GM10248 (cell line): ENCODE measurements at regions of chr10 and their contacts with region 1.

Region 1: GRCh38 chr10:77710759-77711682 is 73.4 kb upstream of the KCNMA1 start:
- DNase-seq: peak; percentile 87
- CTCF ChIP-seq: peak; percentile 99

Region 2: DNA sequence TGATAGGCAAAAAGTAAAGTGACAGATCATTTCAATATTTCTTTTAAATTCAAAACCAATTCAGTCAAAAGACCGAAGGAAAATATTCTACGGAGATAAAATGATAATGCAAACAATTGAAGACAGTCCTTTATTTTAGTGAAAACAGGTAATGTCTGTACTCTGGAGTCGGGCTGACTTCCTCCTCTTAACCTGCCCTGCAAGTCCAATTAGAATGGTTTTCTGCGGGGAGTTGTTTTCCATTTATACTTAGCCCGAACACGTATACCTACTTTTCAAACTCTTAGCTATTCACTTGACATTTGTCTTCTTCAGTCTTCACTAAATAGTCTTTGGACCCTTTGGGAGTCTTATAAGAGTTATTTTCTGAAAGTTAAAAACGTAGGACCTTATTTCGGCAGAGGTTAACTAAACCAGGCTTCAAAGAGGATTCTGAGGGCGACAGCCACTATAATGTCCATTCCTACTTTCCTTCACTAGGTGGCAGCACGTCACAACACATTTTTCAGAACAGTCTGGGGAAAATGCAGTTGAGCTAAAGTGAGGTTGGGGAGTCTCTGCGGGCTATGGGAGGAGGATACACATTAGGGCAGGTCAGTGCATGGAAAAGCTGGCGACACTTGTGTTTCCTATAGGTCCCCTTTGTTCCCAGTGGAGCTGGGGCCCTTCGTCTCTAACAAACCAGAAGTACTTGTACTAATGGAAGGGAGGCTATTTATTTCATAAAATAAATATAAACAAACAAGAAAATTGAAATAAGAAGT is 545.4 kb before region 1 on chr10:
- CTCF ChIA-PET with region 1: interaction called, 115 read pairs
- POLR2A ChIA-PET with region 1: no interaction called
- DNase-seq: peak; percentile 27
- CTCF ChIP-seq: peak; percentile 76

Region 3: GRCh38 chr10:77251297-77252013 is 459.6 kb before region 1 on chr10:
- CTCF ChIA-PET with region 1: interaction called, 10 read pairs
- POLR2A ChIA-PET with region 1: no interaction called
- DNase-seq: no peak
- CTCF ChIP-seq: peak; percentile 25

Region 4: DNA sequence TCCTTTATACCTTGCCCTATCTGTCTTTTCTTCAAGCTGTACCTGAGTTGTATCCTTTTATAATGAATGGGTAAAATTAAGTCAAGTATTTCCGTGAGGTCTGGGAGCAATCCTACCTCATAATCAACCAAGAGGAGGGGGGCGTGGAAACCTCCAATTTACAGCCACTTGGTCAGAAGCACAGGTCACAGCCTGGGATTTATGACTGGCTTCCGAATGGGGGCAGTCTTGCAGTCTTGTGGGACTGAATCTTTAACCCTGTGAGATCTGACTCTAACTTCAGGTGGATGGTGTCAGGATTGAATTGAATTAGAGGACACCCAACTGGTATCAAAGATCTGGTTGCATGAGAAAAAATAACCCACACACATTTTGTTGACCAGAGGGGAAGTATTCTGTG is 49.9 kb before region 1 on chr10:
- CTCF ChIA-PET with region 1: interaction called, 10 read pairs
- POLR2A ChIA-PET with region 1: no interaction called
- DNase-seq: no peak
- CTCF ChIP-seq: no peak

Region 5: GRCh38 chr10:77692782-77693181 is 18.2 kb before region 1 on chr10:
- CTCF ChIA-PET with region 1: interaction called, 84 read pairs
- POLR2A ChIA-PET with region 1: no interaction called
- DNase-seq: no peak
- CTCF ChIP-seq: no peak